B cell (primary cell): ENCODE measurements at regions of chr12 and their contacts with region 1.

Region 1: DNA sequence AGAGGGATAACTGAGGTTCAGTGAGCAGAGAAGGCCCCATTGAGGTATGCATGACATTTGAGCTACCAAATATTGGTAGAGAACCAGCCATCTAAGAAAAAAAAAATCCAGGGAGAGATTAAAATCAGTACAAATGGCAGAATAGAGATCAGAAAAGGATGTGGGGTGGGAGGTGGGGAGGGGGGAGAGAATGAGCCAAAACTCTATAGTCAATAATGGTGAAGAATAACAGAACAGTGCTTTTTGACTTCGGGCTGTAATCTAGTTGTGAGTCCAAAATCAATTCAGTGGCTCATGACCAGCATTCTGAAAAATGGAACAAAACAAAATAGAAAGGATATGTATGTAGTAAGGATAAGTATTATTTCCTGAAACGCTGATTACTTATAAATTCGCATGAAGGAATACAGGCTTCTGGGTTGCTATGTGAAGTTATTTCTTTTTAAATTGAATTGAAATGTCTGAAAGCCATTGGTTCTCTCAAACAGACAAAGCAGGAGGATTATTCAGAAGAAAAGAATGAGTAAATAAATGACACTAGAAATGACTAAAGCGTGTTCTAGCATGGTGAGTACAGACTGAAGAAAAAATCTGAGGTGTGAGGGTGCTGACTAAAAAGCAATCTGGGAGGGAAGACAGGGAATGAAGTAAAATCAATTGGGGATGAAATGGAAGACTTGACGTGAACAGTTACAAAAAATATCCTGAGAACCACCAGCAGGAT is 72.4 kb downstream of the ATP2B1 start:
- DNase-seq: no peak
- ATAC-seq: no peak
- H3K4me3 ChIP-seq: no peak overlapping the region
- H3K4me3 Mint-ChIP-seq: no peak overlapping the region
- H3K27ac ChIP-seq: peak overlapping the region in 1 of 2 donors; percentile 25
- H3K27ac Mint-ChIP-seq: no peak overlapping the region
- H3K4me1 ChIP-seq: no peaks in the 10 kb centered on the region
- H3K4me1 Mint-ChIP-seq: peaks cover 13% of the 10 kb centered on the region
- H3K27me3 ChIP-seq: no peaks in the 10 kb centered on the region
- H3K27me3 Mint-ChIP-seq: no peaks in the 10 kb centered on the region
- CTCF ChIP-seq: no peak

Region 2: DNA sequence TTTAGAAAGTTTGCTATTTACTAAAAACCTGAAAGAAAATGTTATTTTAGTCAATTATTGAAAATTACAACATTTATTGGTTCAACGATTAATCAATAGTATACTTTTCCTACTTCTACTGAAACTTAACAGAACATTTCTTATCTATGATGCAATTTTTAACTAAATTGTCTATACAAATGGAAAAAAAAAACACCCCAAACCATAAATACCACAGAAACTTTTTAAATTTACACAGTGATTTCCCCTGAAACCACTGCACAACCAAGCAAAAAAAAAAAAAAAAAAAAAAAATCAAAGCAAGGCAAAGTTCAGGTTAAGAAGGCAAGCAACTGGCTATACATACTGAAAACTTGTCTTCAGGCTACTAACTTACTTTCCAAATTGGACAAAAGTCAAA is 38.4 kb before region 1 on chr12:
- CTCF ChIA-PET with region 1: no interaction called
- POLR2A ChIA-PET with region 1: no interaction called
- intact Hi-C with region 1: loop called (anchors 5 kb)
- DNase-seq: no peak
- ATAC-seq: no peak
- H3K4me3 ChIP-seq: no peak overlapping the region
- H3K4me3 Mint-ChIP-seq: no peak overlapping the region
- H3K27ac ChIP-seq: peak overlapping the region in 1 of 2 donors; percentile 28
- H3K27ac Mint-ChIP-seq: no peak overlapping the region
- H3K4me1 ChIP-seq: no peaks in the 10 kb centered on the region
- H3K4me1 Mint-ChIP-seq: peaks cover 10% of the 10 kb centered on the region
- H3K27me3 ChIP-seq: no peaks in the 10 kb centered on the region
- H3K27me3 Mint-ChIP-seq: no peaks in the 10 kb centered on the region
- CTCF ChIP-seq: no peak